ENCODE measurements at regions of chr18 and their contacts with region 1.

Region 1: GRCh38 chr18:45997700-45998151 is 30.6 kb upstream of the EPG5 start:
- DNase-seq: no peak
- H3K4me3 ChIP-seq: no peak overlapping the region
- H3K27ac ChIP-seq: no peak overlapping the region
- H3K4me1 ChIP-seq: peaks cover 8% of the 10 kb centered on the region
- H3K27me3 ChIP-seq: no peaks in the 10 kb centered on the region
- CTCF ChIP-seq: no peak

Region 2: GRCh38 chr18:45900623-45901022 is 97.1 kb before region 1 on chr18:
- CTCF ChIA-PET with region 1: no interaction called
- dilution Hi-C with region 1: no loop called
- in situ Hi-C with region 1: no loop called
- intact Hi-C with region 1: no loop called
- DNase-seq: no peak
- H3K4me3 ChIP-seq: no peak overlapping the region
- H3K27ac ChIP-seq: no peak overlapping the region
- H3K4me1 ChIP-seq: no peaks in the 10 kb centered on the region
- H3K27me3 ChIP-seq: no peaks in the 10 kb centered on the region
- CTCF ChIP-seq: no peak

Region 3: DNA sequence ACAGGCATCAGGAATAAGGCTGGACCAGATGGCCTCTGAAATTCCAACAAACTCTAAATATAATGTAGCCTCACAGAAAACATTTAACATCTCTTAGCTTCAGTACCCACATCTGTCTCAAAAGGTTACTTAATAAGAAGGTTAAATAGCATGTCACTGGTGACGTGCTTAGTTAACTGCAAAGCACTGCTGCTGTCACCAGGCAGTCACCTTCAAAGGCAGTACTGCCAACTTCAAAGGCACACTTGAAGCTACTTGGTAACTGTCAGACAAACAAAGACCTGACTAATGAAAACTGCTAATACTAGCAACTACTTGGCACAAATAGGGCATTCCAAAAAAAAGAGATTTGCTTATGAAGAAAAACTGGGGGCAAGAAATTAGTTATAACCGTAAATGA is 66.8 kb before region 1 on chr18:
- CTCF ChIA-PET with region 1: no interaction called
- dilution Hi-C with region 1: no loop called
- in situ Hi-C with region 1: no loop called
- intact Hi-C with region 1: no loop called
- DNase-seq: no peak
- H3K4me3 ChIP-seq: no peak overlapping the region
- H3K27ac ChIP-seq: no peak overlapping the region
- H3K4me1 ChIP-seq: no peaks in the 10 kb centered on the region
- H3K27me3 ChIP-seq: no peaks in the 10 kb centered on the region
- CTCF ChIP-seq: no peak

Region 4: GRCh38 chr18:46051731-46052461 is 54.2 kb after region 1 on chr18:
- CTCF ChIA-PET with region 1: no interaction called
- dilution Hi-C with region 1: loop called (anchors 5 kb)
- in situ Hi-C with region 1: no loop called
- intact Hi-C with region 1: no loop called
- DNase-seq: peak; percentile 94
- H3K4me3 ChIP-seq: no peak overlapping the region
- H3K27ac ChIP-seq: peak overlapping the region; percentile 46
- H3K4me1 ChIP-seq: peaks cover 21% of the 10 kb centered on the region
- H3K27me3 ChIP-seq: no peaks in the 10 kb centered on the region
- CTCF ChIP-seq: no peak

Region 5: DNA sequence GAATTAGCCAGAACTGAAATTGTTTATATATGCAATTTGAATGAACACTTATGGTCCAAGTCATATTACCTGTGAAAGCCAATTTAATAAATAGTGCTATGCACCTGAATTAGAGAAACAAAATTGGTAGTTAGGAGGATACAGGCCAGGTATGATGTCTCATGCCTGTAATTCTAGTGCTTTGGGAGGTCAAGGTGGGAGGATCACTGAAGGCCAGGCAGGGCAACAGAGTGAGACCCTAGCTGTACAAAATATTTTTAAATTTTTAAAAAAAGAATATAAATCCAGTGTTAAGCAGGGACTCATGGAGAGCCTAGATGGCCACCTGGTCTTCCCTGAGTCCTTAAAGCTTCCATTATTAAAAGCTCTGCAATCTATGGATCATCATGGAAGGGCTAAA is 81.6 kb after region 1 on chr18:
- CTCF ChIA-PET with region 1: no interaction called
- dilution Hi-C with region 1: loop called (anchors 5 kb)
- in situ Hi-C with region 1: no loop called
- intact Hi-C with region 1: no loop called
- DNase-seq: no peak
- H3K4me3 ChIP-seq: no peak overlapping the region
- H3K27ac ChIP-seq: no peak overlapping the region
- H3K4me1 ChIP-seq: no peaks in the 10 kb centered on the region
- H3K27me3 ChIP-seq: no peaks in the 10 kb centered on the region
- CTCF ChIP-seq: no peak

Measured in mammary epithelial cell (primary cell).